Activated naive CD4-positive, alpha-beta T cell treated with anti-CD3 and anti-CD28 coated beads for 36 hours (primary cell): ENCODE measurements at regions of chr1 and their contacts with region 1.

Region 1: DNA sequence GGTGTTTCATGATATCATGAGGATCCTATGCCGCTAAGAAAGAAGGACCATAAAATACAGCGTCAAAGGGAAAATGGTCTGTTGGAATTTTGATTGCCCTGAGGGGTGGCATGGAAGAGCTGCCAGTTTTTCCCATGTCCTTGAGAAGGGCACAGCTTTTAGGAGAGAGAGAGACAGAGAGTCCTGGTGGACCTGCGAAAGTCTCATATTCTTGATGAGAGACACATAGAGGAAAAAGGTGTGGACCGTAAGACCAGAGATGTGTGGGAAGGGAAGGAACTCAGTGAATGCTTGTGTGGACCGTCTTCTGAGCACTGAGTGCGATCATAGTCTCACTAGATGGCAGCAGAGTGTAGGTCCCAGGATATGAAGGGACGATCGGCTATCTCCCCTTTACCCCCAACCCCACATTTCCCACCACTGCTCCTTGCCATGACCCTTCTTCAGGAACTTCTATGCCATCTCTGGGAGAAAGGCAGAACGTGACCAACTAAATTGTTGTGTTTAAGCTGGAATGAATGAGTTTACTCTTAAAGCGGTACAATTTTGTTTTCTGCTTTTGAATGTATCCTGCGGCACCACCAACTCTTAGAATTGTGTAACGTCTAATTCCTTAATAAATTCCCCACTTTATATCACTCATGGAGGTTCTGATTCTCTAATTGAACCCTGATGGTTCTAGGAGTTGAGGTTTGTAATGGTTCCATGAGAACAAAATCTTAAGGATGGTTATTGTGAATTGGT is 117.7 kb downstream of the CTH start:
- DNase-seq: peak; percentile 26
- H3K4me3 Mint-ChIP-seq: no peak overlapping the region
- H3K27ac Mint-ChIP-seq: no peak overlapping the region
- H3K4me1 Mint-ChIP-seq: peaks cover 4% of the 10 kb centered on the region
- H3K27me3 Mint-ChIP-seq: peaks cover 5% of the 10 kb centered on the region

Region 2: GRCh38 chr1:70685300-70686241 is 156.8 kb after region 1 on chr1:
- CTCF ChIA-PET with region 1: no interaction called
- intact Hi-C with region 1: loop called (anchors 5 kb)
- DNase-seq: peak; percentile 57
- H3K4me3 Mint-ChIP-seq: no peak overlapping the region
- H3K27ac Mint-ChIP-seq: no peak overlapping the region
- H3K4me1 Mint-ChIP-seq: no peaks in the 10 kb centered on the region
- H3K27me3 Mint-ChIP-seq: peaks cover 11% of the 10 kb centered on the region